A549 (cell line): ENCODE measurements at regions of chr9 and their contacts with region 1.

Region 1: GRCh38 chr9:87713278-87713987 is 12.5 kb upstream of the CTSL start:
- DNase-seq: peak; percentile 89 to 99
- ATAC-seq: peak; percentile 93
- H3K4me3 ChIP-seq: peak overlapping the region; percentile 24; the same call in 1 of the 3 replicates
- H3K27ac ChIP-seq: peak overlapping the region; percentile 95
- H3K4me1 ChIP-seq: peaks cover 55% of the 10 kb centered on the region
- CTCF ChIP-seq: no peak; the same call in 2 of the 3 replicates
- EP300 ChIP-seq: peak; percentile 92 to 97; a peak in 4 of 5 replicates
- POLR2A ChIP-seq: 0 out of 2 replicates have a peak, but pooled peaks have one; percentile 27
- RAD21 ChIP-seq: peak; percentile 9 to 42; a peak in 2 of 5 replicates

Region 2: GRCh38 chr9:87792831-87793288 is 79.4 kb after region 1 on chr9:
- CTCF ChIA-PET with region 1: interaction called, 6 read pairs
- POLR2A ChIA-PET with region 1: interaction called, 31 read pairs
- DNase-seq: peak; percentile 84 to 95
- ATAC-seq: peak; percentile 97 to 98
- H3K4me3 ChIP-seq: peak overlapping the region; percentile 28
- H3K27ac ChIP-seq: peak overlapping the region; percentile 92 to 94
- H3K4me1 ChIP-seq: peaks cover 42% of the 10 kb centered on the region
- CTCF ChIP-seq: 0 out of 3 replicates have a peak, but pooled peaks have one; percentile 14
- EP300 ChIP-seq: no peak; a peak in 1 of 5 replicates
- POLR2A ChIP-seq: no peak
- RAD21 ChIP-seq: peak in 1 of 2 experiments; percentile 33; a peak in 2 of 5 replicates